ENCODE measurements at regions of chr1 and their contacts with region 1.

Region 1: GRCh38 chr1:32400876-32401631 is 6.8 kb upstream of the BSDC1 start:
- DNase-seq: peak; percentile 21 to 66 (median 39)
- H3K4me3 ChIP-seq: no peak overlapping the region
- H3K4me3 Mint-ChIP-seq: peak overlapping the region in 2 of 7 donors; percentile 32 to 83
- H3K27ac ChIP-seq: no peak overlapping the region
- H3K27ac Mint-ChIP-seq: no peak overlapping the region
- H3K4me1 ChIP-seq: no peaks in the 10 kb centered on the region
- H3K4me1 Mint-ChIP-seq: no peaks in the 10 kb centered on the region
- H3K27me3 ChIP-seq: no peaks in the 10 kb centered on the region
- H3K27me3 Mint-ChIP-seq: no peaks in the 10 kb centered on the region

Region 2: DNA sequence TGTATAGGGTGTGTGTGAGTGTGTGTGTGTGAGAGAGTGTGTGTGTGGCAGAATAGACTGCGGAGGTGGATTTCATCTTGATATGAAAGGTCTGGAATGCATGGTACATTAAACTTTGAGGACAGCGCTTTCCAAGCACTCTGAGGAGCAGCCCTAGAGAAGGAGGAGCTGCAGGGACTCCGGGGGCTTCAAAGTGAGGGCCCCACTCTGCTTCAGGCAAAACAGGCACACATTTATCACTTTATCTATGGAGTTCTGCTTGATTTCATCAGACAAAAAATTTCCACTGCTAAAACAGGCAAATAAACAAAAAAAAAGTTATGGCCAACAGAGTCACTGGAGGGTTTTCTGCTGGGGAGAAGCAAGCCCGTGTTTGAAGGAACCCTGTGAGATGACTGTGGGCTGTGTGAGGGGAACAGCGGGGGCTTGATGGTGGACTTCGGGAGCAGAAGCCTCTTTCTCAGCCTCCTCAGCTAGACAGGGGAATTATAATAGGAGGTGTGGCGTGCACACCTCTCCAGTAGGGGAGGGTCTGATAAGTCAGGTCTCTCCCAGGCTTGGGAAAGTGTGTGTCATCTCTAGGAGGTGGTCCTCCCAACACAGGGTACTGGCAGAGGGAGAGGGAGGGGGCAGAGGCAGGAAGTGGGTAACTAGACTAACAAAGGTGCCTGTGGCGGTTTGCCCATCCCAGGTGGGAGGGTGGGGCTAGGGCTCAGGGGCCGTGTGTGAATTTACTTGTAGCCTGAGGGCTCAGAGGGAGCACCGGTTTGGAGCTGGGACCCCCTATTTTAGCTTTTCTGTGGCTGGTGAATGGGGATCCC is 127.5 kb before region 1 on chr1:
- CTCF ChIA-PET with region 1: no interaction called
- POLR2A ChIA-PET with region 1: no interaction called
- DNase-seq: peak; percentile 74 to 92 (median 84)
- H3K4me3 ChIP-seq: peak overlapping the region; percentile 29
- H3K4me3 Mint-ChIP-seq: peak overlapping the region; percentile 31 to 87 (median 81)
- H3K27ac ChIP-seq: peak overlapping the region; percentile 12
- H3K27ac Mint-ChIP-seq: peak overlapping the region; percentile 85 to 96 (median 93)
- H3K4me1 ChIP-seq: peaks cover 66% of the 10 kb centered on the region
- H3K4me1 Mint-ChIP-seq: peaks cover 51 to 62% (median 54%) of the 10 kb centered on the region in 3 donors
- H3K27me3 ChIP-seq: no peaks in the 10 kb centered on the region
- H3K27me3 Mint-ChIP-seq: peaks cover 0 to 5% of the 10 kb centered on the region in 2 donors

Region 3: DNA sequence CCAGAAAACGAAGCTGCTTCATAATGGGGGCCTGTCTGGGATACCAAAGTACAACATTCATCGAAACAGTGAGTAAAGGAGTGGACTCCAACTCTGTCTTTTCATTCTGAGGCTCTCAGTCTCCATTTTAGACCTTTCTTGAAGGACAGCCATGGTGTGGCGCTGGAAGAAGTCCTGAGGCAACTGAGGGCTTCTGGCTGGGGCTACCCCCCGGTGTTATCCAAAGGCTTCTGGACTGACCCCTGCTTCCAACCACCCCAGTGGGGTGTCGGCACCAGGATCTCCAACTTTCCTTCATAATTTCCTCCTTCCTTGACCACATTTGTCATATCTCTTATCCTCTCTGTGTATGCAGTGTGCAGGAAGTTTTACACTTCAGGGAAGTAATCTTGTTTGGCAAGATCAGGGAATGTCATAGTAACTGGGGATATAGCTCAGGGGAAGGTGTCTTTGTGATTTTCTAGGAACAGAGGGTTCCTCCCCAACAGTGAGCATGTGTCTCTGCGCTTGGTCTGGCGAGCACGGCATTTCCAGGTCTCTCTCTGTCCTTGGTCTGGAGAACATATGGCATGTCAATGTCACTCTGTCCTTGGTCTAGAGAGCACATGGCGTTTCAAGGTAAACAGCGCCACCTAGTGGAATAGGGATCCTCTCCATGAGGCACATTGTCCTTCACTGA is 12.6 kb after region 1 on chr1:
- CTCF ChIA-PET with region 1: interaction called, 19 read pairs
- POLR2A ChIA-PET with region 1: no interaction called
- DNase-seq: peak; percentile 63 to 83 (median 65)
- H3K4me3 ChIP-seq: no peak overlapping the region
- H3K4me3 Mint-ChIP-seq: no peak overlapping the region
- H3K27ac ChIP-seq: no peak overlapping the region
- H3K27ac Mint-ChIP-seq: peak overlapping the region in 1 of 8 donors; percentile 38
- H3K4me1 ChIP-seq: no peaks in the 10 kb centered on the region
- H3K4me1 Mint-ChIP-seq: peaks cover 2 to 3% (median 3%) of the 10 kb centered on the region in 3 donors
- H3K27me3 ChIP-seq: no peaks in the 10 kb centered on the region
- H3K27me3 Mint-ChIP-seq: peaks cover 17 to 38% of the 10 kb centered on the region in 2 donors